ENCODE measurements at regions of chr2 and their contacts with region 1.

Region 1: DNA sequence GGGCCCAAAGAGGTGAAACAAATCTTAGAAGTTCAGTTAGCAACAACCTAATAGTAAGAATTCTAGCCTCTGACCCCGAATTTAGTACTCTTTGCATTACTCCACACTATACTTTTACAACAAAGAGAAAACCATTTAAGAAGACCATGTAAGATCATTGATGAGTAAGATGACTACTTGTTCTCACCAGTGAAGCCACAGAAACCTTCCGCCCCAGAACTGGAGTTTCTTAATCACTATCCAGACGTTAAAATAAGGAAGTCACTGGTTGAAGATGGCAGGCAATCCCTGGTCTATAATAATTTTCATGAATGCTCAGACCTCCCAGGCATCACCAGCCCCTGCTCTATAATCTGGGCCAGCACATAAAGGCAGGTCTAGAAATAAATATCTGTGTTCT is 95.0 kb downstream of the TMEM163 start:
- DNase-seq: no peak
- ATAC-seq: peak; percentile 69
- H3K4me3 Mint-ChIP-seq: peak overlapping the region; percentile 71
- H3K27ac Mint-ChIP-seq: peak overlapping the region; percentile 91
- H3K4me1 Mint-ChIP-seq: peaks cover 28% of the 10 kb centered on the region
- H3K27me3 Mint-ChIP-seq: no peaks in the 10 kb centered on the region
- CTCF ChIP-seq: no peak

Region 2: DNA sequence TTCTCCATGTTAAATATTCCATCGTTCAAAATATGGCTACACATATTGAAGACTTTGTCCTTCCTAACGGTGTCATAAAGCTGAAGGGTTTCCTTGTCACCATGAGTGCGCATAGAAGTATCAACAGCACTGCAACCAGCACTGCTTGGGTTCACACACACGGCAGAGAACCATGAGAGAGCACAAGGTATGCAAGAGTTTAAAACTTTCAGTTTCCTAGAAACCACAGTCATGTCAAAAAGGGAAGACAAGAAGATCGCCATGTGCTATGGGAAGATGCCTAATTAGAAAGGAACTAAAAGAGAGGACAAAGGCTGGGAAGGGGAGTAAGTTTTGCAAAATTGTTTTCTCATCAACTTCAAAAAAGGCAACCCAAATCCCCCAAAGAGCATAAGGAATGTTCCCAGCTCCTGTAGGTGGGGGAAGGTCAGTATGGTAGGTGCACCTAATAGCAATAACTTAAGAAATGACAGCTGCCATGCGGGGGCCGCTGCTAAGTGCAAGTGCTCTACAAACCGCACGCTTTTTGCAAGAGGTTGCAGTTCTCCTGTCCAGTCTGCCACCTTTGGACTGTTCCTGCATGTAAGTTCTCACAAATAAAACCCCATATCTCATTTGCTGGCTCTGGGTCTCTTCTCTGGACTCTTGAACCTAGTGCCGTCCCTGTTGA is 41.8 kb before region 1 on chr2:
- CTCF ChIA-PET with region 1: no interaction called
- POLR2A ChIA-PET with region 1: interaction called, 3 read pairs
- intact Hi-C with region 1: loop called (anchors 2 kb)
- DNase-seq: no peak
- ATAC-seq: peak; percentile 26
- H3K4me3 Mint-ChIP-seq: peak overlapping the region; percentile 22
- H3K27ac Mint-ChIP-seq: peak overlapping the region; percentile 80
- H3K4me1 Mint-ChIP-seq: peaks cover 39% of the 10 kb centered on the region
- H3K27me3 Mint-ChIP-seq: no peaks in the 10 kb centered on the region
- CTCF ChIP-seq: no peak

Measured in activated B cell treated with CpG ODN at 0.5 μM for 24 hours (primary cell).